ENCODE measurements at regions of chr3 and their contacts with region 1.

Region 1: GRCh38 chr3:20040476-20041196 is 390 bp downstream of the KAT2B start:
- DNase-seq: peak; percentile 78
- CTCF ChIP-seq: peak; percentile 33

Region 2: GRCh38 chr3:20051123-20051806 is 10.6 kb after region 1 on chr3:
- CTCF ChIA-PET with region 1: interaction called, 10 read pairs
- POLR2A ChIA-PET with region 1: no interaction called
- DNase-seq: no peak
- CTCF ChIP-seq: no peak